Activated T-helper 1 cell treated with anti-CD3 and anti-CD28 coated beads, Interleukin-12 subunit alpha, Interleukin-12 subunit beta, Interleukin-2, Interleukin-4 antibody, amounts not matched to agents 30 ng/mL and 10 ng/mL and 1 ng/mL, durations not matched to agents 14 hours and 24 hours and 36 hours (primary cell): ENCODE measurements at regions of chr4 and their contacts with region 1.

Region 1: GRCh38 chr4:93912146-93912545 is 83.6 kb downstream of the ATOH1 start:
- DNase-seq: no peak
- H3K4me3 Mint-ChIP-seq: no peak overlapping the region
- H3K27ac Mint-ChIP-seq: no peak overlapping the region
- H3K4me1 Mint-ChIP-seq: no peaks in the 10 kb centered on the region
- H3K27me3 Mint-ChIP-seq: no peaks in the 10 kb centered on the region

Region 2: GRCh38 chr4:93957186-93957585 is 45.0 kb after region 1 on chr4:
- intact Hi-C with region 1: no loop called
- DNase-seq: no peak
- H3K4me3 Mint-ChIP-seq: no peak overlapping the region
- H3K27ac Mint-ChIP-seq: no peak overlapping the region
- H3K4me1 Mint-ChIP-seq: no peaks in the 10 kb centered on the region
- H3K27me3 Mint-ChIP-seq: no peaks in the 10 kb centered on the region

Region 3: GRCh38 chr4:94036964-94037363 is 124.8 kb after region 1 on chr4:
- intact Hi-C with region 1: no loop called
- DNase-seq: no peak
- H3K4me3 Mint-ChIP-seq: no peak overlapping the region
- H3K27ac Mint-ChIP-seq: no peak overlapping the region
- H3K4me1 Mint-ChIP-seq: no peaks in the 10 kb centered on the region
- H3K27me3 Mint-ChIP-seq: no peaks in the 10 kb centered on the region

Region 4: GRCh38 chr4:94256828-94257227 is 344.7 kb after region 1 on chr4:
- intact Hi-C with region 1: loop called (anchors 10 kb)
- DNase-seq: no peak
- H3K4me3 Mint-ChIP-seq: no peak overlapping the region
- H3K27ac Mint-ChIP-seq: no peak overlapping the region
- H3K4me1 Mint-ChIP-seq: no peaks in the 10 kb centered on the region
- H3K27me3 Mint-ChIP-seq: no peaks in the 10 kb centered on the region

Region 5: GRCh38 chr4:94480362-94480951 is 568.3 kb after region 1 on chr4:
- intact Hi-C with region 1: no loop called
- DNase-seq: no peak
- H3K4me3 Mint-ChIP-seq: no peak overlapping the region
- H3K27ac Mint-ChIP-seq: no peak overlapping the region
- H3K4me1 Mint-ChIP-seq: peaks cover 7% of the 10 kb centered on the region
- H3K27me3 Mint-ChIP-seq: no peaks in the 10 kb centered on the region